ENCODE measurements at regions of chr18 and their contacts with region 1.

Region 1: DNA sequence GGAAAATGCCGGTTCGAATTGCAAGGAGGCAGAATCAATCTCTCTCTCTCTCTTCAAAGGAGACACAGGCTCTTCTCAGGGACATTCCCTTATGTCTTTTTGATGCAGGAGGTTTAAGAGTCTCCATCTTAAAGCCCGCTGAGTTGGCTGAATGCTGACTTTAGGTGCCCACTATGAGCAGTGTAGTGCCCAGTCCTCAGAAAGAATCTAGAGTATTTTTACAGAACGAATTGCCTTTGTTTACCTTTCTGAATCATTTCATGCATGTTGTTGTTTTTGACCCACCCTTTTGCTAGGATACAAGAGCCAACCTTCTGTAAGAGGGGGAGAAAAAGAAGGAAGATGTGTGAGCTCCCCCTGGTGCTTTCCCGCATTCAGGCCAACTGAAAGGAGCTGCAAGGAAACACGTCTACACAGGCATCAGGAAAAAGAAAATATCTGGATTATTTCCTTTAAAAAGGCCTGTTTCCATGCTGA is 193.5 kb upstream of the TCF4 start:
- DNase-seq: peak in 4 of 5 donors; percentile 33 to 58 (median 48)
- ATAC-seq: peak in 3 of 4 donors; percentile 65 to 75 (median 75)
- H3K4me3 ChIP-seq: no peak overlapping the region
- H3K27ac ChIP-seq: peak overlapping the region; percentile 48 to 95 (median 88)
- H3K4me1 ChIP-seq: peaks cover 0 to 30% (median 20%) of the 10 kb centered on the region in 12 donors
- H3K27me3 ChIP-seq: peaks cover 0 to 3% (median 0%) of the 10 kb centered on the region in 9 donors
- CTCF ChIP-seq: peak; percentile 31 to 75 (median 68)
- POLR2A ChIP-seq: no peak

Region 2: DNA sequence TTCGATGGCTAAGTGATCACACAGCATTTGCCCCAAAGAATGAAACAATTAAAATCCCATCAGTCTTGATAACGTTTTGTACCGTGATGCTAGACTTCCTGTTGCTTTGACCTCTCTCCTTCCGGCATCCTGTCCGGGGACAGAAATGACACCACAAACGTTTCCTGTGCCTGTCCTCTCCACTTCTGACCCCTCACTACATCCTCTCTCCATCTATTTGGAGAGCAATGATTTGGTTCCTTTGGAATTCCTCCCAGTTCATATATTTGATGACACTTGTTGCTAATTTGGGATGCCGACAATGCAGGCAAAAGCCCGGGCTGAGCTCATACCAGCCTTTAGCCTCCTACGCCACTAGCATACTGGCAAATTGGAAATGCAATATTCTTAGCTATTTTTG is 671.1 kb before region 1 on chr18:
- intact Hi-C with region 1: loop called in 1 of 10 experiments (anchors 5 kb)
- DNase-seq: peak in 4 of 5 donors; percentile 35 to 69 (median 48)
- ATAC-seq: peak; percentile 83 to 96 (median 90)
- H3K4me3 ChIP-seq: no peak overlapping the region
- H3K27ac ChIP-seq: peak overlapping the region in 11 of 12 donors; percentile 39 to 88 (median 77)
- H3K4me1 ChIP-seq: peaks cover 0 to 28% (median 8%) of the 10 kb centered on the region in 12 donors
- H3K27me3 ChIP-seq: no peaks in the 10 kb centered on the region
- CTCF ChIP-seq: no peak
- POLR2A ChIP-seq: no peak

Region 3: DNA sequence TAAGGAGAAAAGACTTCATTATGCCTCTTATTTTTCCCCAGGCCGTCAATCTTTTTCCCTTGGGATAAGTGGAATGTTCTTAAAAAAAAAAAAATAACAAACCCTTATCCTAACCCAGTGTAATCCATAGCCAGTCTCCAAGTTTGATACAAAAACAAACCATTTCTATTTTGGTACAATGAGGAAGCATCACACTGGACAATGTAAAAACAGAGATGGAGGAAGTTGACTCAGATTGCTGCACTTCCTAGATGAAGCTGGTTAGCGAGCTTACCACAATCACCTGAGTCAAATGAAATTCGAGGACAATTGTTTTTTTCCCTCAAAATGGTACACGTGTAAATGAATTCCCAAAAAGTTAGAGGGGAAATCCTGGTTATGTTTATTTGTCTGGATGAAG is 453.2 kb before region 1 on chr18:
- intact Hi-C with region 1: loop called in 1 of 10 experiments (anchors 5 kb)
- DNase-seq: peak in 1 of 5 donors; percentile 33
- ATAC-seq: peak; percentile 79 to 94 (median 87)
- H3K4me3 ChIP-seq: no peak overlapping the region
- H3K27ac ChIP-seq: peak overlapping the region; percentile 45 to 80 (median 67)
- H3K4me1 ChIP-seq: peaks cover 0 to 69% (median 53%) of the 10 kb centered on the region in 12 donors
- H3K27me3 ChIP-seq: no peaks in the 10 kb centered on the region
- CTCF ChIP-seq: no peak
- POLR2A ChIP-seq: no peak

Region 4: DNA sequence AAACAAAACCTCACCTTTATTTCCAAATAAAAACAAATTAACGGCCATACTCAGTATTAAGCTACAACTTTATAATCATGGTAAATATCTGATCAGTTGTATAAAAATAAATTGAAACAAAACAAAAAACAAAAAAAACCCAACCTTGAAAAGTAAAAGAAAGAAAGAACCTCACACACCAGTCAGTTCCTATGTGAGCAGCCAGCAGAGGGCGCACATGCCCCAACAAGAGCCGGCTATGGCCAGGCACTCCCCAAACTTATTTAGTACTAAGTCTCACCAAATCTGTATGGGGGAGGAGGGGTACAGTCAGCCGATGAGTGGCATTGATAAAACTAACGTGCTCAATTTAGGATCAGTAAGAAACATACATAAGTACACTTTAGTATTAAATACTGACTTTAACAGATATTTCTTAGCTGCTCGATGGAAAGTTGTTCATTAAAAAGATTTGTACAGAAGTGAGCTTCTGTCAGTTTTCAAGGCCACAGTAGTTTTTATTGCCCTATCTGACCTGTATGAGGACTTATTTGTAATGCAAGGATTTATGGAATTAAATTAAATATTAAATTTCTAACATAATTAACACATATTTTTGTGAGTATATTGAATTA is 366.2 kb before region 1 on chr18:
- intact Hi-C with region 1: loop called (anchors 2 to 10 kb)
- DNase-seq: peak; percentile 85 to 92 (median 88)
- ATAC-seq: peak; percentile 85 to 93 (median 88)
- H3K4me3 ChIP-seq: no peak overlapping the region
- H3K27ac ChIP-seq: peak overlapping the region in 7 of 12 donors; percentile 1 to 58 (median 21)
- H3K4me1 ChIP-seq: peaks cover 0 to 67% (median 27%) of the 10 kb centered on the region in 12 donors
- H3K27me3 ChIP-seq: no peaks in the 10 kb centered on the region
- CTCF ChIP-seq: peak; percentile 83 to 97 (median 94)
- POLR2A ChIP-seq: no peak

Region 5: GRCh38 chr18:55589625-55590291 is 191.8 kb before region 1 on chr18:
- intact Hi-C with region 1: loop called in 8 of 10 experiments (anchors 1 to 5 kb)
- DNase-seq: peak; percentile 97 to 98 (median 98)
- ATAC-seq: peak; percentile 96 to 99 (median 98)
- H3K4me3 ChIP-seq: peak overlapping the region; percentile 63 to 82 (median 74)
- H3K27ac ChIP-seq: peak overlapping the region; percentile 80 to 92 (median 87)
- H3K4me1 ChIP-seq: peaks cover 0 to 23% (median 6%) of the 10 kb centered on the region in 12 donors
- H3K27me3 ChIP-seq: no peaks in the 10 kb centered on the region
- CTCF ChIP-seq: peak in 5 of 12 donors; percentile 6 to 41 (median 25)
- POLR2A ChIP-seq: peak in 1 of 2 donors; percentile 57

Region 6: GRCh38 chr18:55988537-55988936 is 207.0 kb after region 1 on chr18:
- intact Hi-C with region 1: loop called in 2 of 10 experiments (anchors 10 kb)
- DNase-seq: peak in 4 of 5 donors; percentile 36 to 70 (median 46)
- ATAC-seq: peak; percentile 94 to 98 (median 96)
- H3K4me3 ChIP-seq: no peak overlapping the region
- H3K27ac ChIP-seq: peak overlapping the region; percentile 11 to 90 (median 71)
- H3K4me1 ChIP-seq: peaks cover 0 to 14% (median 2%) of the 10 kb centered on the region in 12 donors
- H3K27me3 ChIP-seq: no peaks in the 10 kb centered on the region
- CTCF ChIP-seq: no peak
- POLR2A ChIP-seq: no peak

Region 7: GRCh38 chr18:56575819-56576663 is 794.5 kb after region 1 on chr18:
- intact Hi-C with region 1: loop called in 6 of 10 experiments (anchors 2 to 10 kb)
- DNase-seq: peak in 1 of 5 donors; percentile 45
- ATAC-seq: peak; percentile 72 to 90 (median 80)
- H3K4me3 ChIP-seq: peak overlapping the region in 2 of 12 donors; percentile 6 to 26
- H3K27ac ChIP-seq: peak overlapping the region in 11 of 12 donors; percentile 39 to 84 (median 73)
- H3K4me1 ChIP-seq: peaks cover 10 to 38% (median 29%) of the 10 kb centered on the region in 12 donors
- H3K27me3 ChIP-seq: no peaks in the 10 kb centered on the region
- CTCF ChIP-seq: peak; percentile 55 to 88 (median 77)
- POLR2A ChIP-seq: no peak